ENCODE measurements at regions of chr1 and their contacts with region 1.

Region 1: DNA sequence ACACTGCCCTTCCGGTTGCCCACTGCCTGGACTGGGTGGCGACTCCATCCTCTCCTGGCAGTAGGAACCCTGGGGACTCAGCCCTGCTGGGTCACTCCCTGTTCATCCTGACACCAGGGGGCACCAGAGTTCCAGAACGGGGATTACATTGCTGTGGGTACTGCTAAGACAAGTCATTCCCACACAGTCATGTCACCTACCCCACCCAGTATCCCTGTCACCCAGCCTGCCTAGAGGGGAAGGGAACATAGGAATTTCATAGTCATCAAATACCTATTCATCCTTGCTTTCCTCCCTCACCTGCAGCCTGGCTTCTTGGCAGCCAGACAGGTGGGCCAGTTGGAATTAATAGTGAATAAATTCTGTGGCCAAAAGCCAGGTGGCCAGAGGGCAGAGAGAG is 9.8 kb upstream of the SFN start:
- DNase-seq: peak; percentile 94 to 95
- H3K4me3 ChIP-seq: no peak overlapping the region
- H3K27ac ChIP-seq: peak overlapping the region; percentile 88
- H3K4me1 ChIP-seq: peaks cover 63% of the 10 kb centered on the region
- H3K27me3 ChIP-seq: no peaks in the 10 kb centered on the region
- CTCF ChIP-seq: peak; percentile 79

Region 2: DNA sequence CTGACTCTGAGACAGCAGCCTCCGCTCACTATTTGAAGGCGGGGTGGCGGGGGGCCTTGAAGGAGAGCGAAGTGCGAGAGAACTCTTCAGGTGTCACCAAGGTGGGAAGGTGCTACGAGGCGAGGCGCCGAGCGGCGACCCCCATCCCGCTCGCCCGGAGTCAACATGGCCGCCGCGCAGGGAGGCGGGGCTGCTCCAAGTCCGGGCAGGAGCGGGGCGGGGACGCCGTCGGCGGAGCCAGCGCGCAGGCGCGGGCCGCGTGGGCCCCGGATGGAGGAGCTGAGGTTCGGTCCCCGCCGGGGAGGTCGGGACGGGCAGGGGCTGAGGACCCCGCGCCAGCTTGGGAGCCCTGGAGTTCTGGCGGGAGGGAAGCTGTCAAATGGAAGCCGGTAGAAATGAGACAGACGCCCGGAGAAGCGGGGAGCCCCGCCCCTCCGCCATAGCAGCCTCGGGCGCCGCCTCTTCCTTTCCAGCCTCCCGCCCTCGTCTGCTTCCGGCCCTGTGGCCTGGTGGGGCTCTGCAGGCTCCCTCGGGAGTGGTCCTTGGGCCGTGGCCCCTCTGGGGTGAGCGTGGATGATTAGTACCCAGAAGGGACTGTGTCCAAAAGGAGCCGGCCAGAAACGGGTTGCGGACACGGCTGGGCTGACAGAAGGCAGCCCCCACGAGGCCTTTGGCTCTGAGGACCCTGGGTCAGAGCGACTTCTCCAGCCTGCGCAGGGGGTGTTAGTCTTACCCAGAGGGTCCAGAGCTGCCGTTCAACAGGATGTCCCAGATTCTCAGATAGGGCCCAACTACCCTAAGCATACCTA is 65.2 kb before region 1 on chr1 and contains the start of gene PIGV:
- CTCF ChIA-PET with region 1: no interaction called
- POLR2A ChIA-PET with region 1: interaction called, 3 read pairs
- intact Hi-C with region 1: loop called (anchors 1 kb)
- DNase-seq: peak in 1 of 2 experiments; percentile 84
- H3K4me3 ChIP-seq: peak within 1 kb of the TSS; percentile 93
- H3K27ac ChIP-seq: peak within 1 kb of the TSS; percentile 92
- H3K4me1 ChIP-seq: peaks cover 52% of the 10 kb centered on the region
- H3K27me3 ChIP-seq: no peaks in the 10 kb centered on the region
- CTCF ChIP-seq: no peak
- total RNA-seq, gene PIGV: 30.8 and 31.9 TPM in 2 replicates

Region 3: GRCh38 chr1:26811057-26811456 is 42.1 kb before region 1 on chr1:
- CTCF ChIA-PET with region 1: interaction called, 4 read pairs
- POLR2A ChIA-PET with region 1: no interaction called
- intact Hi-C with region 1: loop called (anchors 5 kb)
- DNase-seq: no peak
- H3K4me3 ChIP-seq: no peak overlapping the region
- H3K27ac ChIP-seq: no peak overlapping the region
- H3K4me1 ChIP-seq: 0 out of 2 replicates have a peak, but pooled peaks cover 4% of the 10 kb centered on the region
- H3K27me3 ChIP-seq: no peaks in the 10 kb centered on the region
- CTCF ChIP-seq: no peak

Region 4: DNA sequence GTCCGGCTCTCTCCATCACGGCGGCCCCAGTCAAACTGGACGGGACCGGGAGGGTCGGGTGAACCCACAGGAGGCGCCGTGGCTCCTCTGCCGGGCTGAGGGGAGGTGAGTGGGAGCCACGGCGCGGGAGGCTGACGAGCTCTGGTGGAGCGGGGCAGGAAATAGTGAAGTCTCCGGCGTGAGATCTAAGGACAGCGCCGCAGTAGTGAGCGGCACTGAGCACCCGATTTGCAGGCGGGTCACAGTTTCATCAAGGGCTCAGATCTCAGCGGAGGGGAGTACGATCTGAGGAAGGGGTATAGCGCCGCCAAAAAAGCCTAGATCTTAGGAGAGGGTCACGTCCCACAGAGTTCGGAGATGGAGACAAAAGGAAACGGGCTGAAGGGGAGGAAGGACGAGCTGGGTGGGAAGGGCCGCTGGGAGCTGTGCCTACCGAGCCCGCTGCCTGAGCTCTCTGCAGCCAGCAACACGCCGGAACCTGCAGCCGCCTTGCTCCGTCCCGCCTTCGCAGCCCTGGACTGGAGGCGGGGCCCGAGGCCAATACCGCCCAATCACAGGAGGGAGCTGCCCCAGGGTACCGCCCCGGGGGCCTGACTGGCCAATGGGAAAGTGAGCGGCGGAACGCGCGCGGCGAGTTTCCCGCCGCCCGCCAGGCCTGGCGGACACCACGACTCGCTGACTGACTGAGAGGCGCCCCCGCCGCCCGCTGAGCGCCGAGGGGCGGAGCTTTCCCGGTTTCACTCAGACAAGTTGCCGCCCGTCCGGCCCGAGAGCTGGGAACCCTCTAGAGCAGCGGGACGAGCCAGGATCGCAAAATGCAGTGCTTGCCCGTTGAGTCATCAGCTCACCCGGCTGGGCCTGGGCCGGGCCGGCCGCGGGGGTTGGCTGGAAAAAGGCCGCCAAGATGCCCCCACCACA is 11.7 kb after region 1 on chr1:
- CTCF ChIA-PET with region 1: interaction called, 18 read pairs
- POLR2A ChIA-PET with region 1: interaction called, 42 read pairs
- intact Hi-C with region 1: loop called (anchors 1 kb)
- DNase-seq: peak; percentile 86 to 98
- H3K4me3 ChIP-seq: peak overlapping the region; percentile 85
- H3K27ac ChIP-seq: peak overlapping the region; percentile 100
- H3K4me1 ChIP-seq: peaks cover 57% of the 10 kb centered on the region
- H3K27me3 ChIP-seq: no peaks in the 10 kb centered on the region
- CTCF ChIP-seq: no peak

Region 5: GRCh38 chr1:27010989-27011764 is 158.0 kb after region 1 on chr1:
- CTCF ChIA-PET with region 1: interaction called, 4 read pairs
- POLR2A ChIA-PET with region 1: interaction called, 5 read pairs
- intact Hi-C with region 1: loop called (anchors 5 kb)
- DNase-seq: peak; percentile 87 to 92
- H3K4me3 ChIP-seq: no peak overlapping the region
- H3K27ac ChIP-seq: peak overlapping the region; percentile 79
- H3K4me1 ChIP-seq: peaks cover 53% of the 10 kb centered on the region
- H3K27me3 ChIP-seq: no peaks in the 10 kb centered on the region
- CTCF ChIP-seq: no peak

Measured in PC-9 (cell line).